GM12878 (cell line): ENCODE measurements at regions of chr6 and their contacts with region 1.

Region 1: GRCh38 chr6:53326372-53327016 is 22.3 kb downstream of the ELOVL5 start:
- DNase-seq: no peak
- ATAC-seq: peak; percentile 8; the same call in 1 of the 3 replicates
- H3K4me3 ChIP-seq: no peak overlapping the region
- H3K27ac ChIP-seq: no peak overlapping the region
- H3K4me1 ChIP-seq: peaks cover 2% of the 10 kb centered on the region; the same call in 1 of the 2 replicates
- H3K27me3 ChIP-seq: no peaks in the 10 kb centered on the region
- CTCF ChIP-seq: no peak
- EP300 ChIP-seq: no peak
- POLR2A ChIP-seq: no peak
- RAD21 ChIP-seq: no peak

Region 2: GRCh38 chr6:53315086-53315724 is 11.3 kb before region 1 on chr6:
- CTCF ChIA-PET with region 1: interaction called, 10 read pairs
- POLR2A ChIA-PET with region 1: interaction called, 16 read pairs
- RAD21 ChIA-PET with region 1: interaction called, 15 read pairs
- SMC1A ChIA-PET with region 1: interaction called, 52 read pairs
- in situ Hi-C with region 1: no loop called
- intact Hi-C with region 1: no loop called
- DNase-seq: no peak
- ATAC-seq: no peak
- H3K4me3 ChIP-seq: no peak overlapping the region
- H3K27ac ChIP-seq: no peak overlapping the region
- H3K4me1 ChIP-seq: peaks cover 13% of the 10 kb centered on the region
- H3K27me3 ChIP-seq: no peaks in the 10 kb centered on the region
- CTCF ChIP-seq: no peak
- EP300 ChIP-seq: no peak
- POLR2A ChIP-seq: no peak
- RAD21 ChIP-seq: no peak

Region 3: DNA sequence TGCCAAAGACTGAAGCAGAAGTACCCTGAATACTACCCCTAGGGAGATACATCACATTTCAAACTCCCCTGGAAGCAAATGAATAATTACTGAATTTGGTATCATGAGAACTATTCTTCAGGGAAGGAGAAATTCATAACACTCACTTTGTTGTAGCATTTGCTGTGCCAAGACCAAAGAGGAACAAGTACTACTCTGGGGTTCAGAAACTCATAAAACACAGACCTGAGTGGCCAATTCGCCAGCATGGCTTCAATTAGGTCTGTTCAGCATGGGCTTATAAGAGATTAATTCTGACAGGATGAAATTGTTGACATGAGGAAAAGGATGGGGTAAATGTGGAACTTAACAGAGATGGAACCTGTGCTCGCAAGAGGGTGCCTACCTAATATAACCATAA is 15.7 kb after region 1 on chr6:
- CTCF ChIA-PET with region 1: interaction called, 16 read pairs
- POLR2A ChIA-PET with region 1: interaction called, 8 read pairs
- RAD21 ChIA-PET with region 1: interaction called, 5 read pairs
- SMC1A ChIA-PET with region 1: interaction called, 63 read pairs
- in situ Hi-C with region 1: no loop called
- intact Hi-C with region 1: no loop called
- DNase-seq: no peak
- ATAC-seq: peak; percentile 28
- H3K4me3 ChIP-seq: peak overlapping the region; percentile 5; the same call in 1 of the 2 replicates
- H3K27ac ChIP-seq: no peak overlapping the region
- H3K4me1 ChIP-seq: peaks cover 23% of the 10 kb centered on the region
- H3K27me3 ChIP-seq: no peaks in the 10 kb centered on the region
- CTCF ChIP-seq: no peak
- EP300 ChIP-seq: no peak
- POLR2A ChIP-seq: no peak
- RAD21 ChIP-seq: no peak

Region 4: GRCh38 chr6:53581173-53581773 is 254.8 kb after region 1 on chr6:
- CTCF ChIA-PET with region 1: no interaction called
- POLR2A ChIA-PET with region 1: no interaction called
- RAD21 ChIA-PET with region 1: no interaction called
- SMC1A ChIA-PET with region 1: no interaction called
- in situ Hi-C with region 1: no loop called
- intact Hi-C with region 1: no loop called
- DNase-seq: no peak
- ATAC-seq: peak; percentile 43
- H3K4me3 ChIP-seq: no peak overlapping the region
- H3K27ac ChIP-seq: no peak overlapping the region
- H3K4me1 ChIP-seq: no peaks in the 10 kb centered on the region
- H3K27me3 ChIP-seq: no peaks in the 10 kb centered on the region; a peak in 1 of 4 replicates
- CTCF ChIP-seq: no peak
- EP300 ChIP-seq: no peak
- POLR2A ChIP-seq: no peak
- RAD21 ChIP-seq: no peak